ENCODE measurements at regions of chr12 and their contacts with region 1.

Region 1: DNA sequence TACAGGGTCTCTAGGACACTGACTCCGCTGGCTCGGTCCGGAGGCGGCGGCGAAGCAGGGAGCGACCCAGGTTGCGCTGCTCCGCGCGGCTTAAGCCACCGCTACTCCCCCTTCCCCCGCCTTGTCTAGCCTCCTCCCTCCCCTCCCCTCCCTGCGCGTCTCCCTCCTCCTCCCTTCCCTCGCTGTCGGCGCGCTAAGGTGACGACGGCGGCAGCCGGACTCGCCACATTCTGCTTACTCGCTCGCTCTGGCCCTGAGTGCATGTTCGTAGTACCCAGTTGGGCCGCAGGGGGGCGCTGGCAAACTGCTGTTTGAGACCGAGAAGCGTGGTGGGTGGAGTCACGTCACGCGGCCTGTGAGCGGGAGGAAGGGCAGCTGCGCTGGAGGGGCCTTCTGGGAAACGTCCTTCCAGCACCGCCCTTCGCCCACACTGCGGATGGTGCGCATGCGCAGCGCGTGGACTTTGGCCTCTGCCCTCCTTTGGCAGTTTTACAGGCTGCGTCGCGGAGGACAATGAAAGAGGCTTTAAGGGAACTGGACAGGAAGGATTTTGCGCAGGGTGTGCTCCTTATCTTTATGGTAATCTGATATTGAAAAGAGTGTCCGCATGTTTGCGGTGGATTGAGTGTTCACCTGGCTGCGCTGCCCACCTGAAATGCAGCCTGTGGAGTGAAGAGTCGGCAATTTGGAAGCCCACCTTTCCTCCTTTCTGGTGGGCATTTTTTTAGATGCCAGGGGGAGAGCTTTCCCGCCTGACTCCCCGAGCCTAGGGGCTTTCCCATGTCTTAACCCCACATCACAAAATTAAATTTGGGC is at the start of gene SCAF11:
- DNase-seq: peak; percentile 100
- H3K4me3 Mint-ChIP-seq: peak within 1 kb of the TSS; percentile 97
- H3K27ac Mint-ChIP-seq: peak within 1 kb of the TSS; percentile 99
- H3K4me1 Mint-ChIP-seq: peaks cover 40% of the 10 kb centered on the region
- H3K27me3 Mint-ChIP-seq: peaks cover 3% of the 10 kb centered on the region
- total RNA-seq, gene SCAF11: 114 to 116 TPM

Region 2: DNA sequence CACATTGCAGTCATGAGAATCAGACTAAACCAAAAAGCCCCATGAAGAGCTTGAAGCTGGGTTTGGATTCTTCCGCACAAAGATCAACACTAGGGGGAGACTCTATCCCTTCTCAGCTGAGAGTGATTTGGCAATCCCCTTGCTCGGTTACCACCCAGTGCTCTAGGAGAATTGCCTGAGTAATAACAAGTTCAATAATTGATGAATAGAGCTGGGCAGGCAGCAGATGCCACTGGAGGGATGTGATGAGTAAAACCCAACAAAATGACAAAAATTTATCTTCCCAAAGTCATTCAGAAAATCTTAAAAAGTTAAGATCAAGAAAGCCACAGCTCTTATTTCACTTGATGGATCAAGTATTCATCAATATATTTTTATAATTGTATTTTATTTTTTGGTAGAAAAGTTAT is 446.8 kb before region 1 on chr12:
- CTCF ChIA-PET with region 1: interaction called, 3 read pairs
- POLR2A ChIA-PET with region 1: no interaction called
- intact Hi-C with region 1: loop called (anchors 5 kb)
- DNase-seq: peak; percentile 58
- H3K4me3 Mint-ChIP-seq: no peak overlapping the region
- H3K27ac Mint-ChIP-seq: no peak overlapping the region
- H3K4me1 Mint-ChIP-seq: peaks cover 1% of the 10 kb centered on the region
- H3K27me3 Mint-ChIP-seq: peaks cover 2% of the 10 kb centered on the region

Region 3: GRCh38 chr12:45849289-45849688 is 141.4 kb before region 1 on chr12:
- CTCF ChIA-PET with region 1: no interaction called
- POLR2A ChIA-PET with region 1: no interaction called
- intact Hi-C with region 1: no loop called
- DNase-seq: no peak
- H3K4me3 Mint-ChIP-seq: no peak overlapping the region
- H3K27ac Mint-ChIP-seq: no peak overlapping the region
- H3K4me1 Mint-ChIP-seq: no peaks in the 10 kb centered on the region
- H3K27me3 Mint-ChIP-seq: no peaks in the 10 kb centered on the region

Region 4: DNA sequence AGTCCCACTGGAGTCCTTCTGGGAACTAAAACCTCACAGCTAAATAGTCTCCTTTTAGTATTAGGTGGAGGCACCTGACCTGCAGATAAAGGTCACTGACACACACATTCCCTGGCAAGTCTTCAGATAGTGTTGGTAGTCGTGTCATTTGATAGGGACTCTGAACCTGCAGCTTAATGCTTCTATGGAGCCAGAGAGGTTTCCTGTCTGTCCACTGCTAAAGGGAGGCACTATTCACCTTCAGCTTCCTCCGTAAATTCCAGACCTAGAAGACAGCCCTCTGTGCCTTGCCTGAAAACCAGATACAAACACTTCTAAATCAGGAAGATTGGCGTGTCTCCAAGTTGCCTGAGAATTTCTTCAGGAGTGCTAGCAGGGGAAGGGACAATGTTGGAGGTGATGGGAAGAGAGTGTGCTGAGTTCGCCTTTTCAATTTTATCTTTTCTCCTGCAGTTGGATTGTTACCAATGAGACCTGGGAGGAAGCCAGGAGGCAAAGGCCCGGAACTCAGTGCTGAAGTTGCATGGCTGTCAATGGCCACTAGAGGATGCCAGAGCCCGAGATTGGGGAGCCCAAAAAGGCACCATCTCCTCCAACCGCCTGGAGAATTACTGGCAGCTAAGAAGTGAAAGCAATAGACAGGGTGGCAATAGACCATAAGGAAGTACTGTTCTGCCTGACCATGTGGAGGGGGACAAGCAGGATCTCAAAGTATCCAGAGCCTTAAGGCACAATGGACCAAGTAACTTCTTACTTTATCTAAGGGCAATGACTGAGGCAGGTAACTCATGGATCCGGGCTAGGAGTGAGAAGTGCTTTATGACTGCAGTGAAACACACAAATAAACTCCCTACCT is 81.3 kb after region 1 on chr12:
- CTCF ChIA-PET with region 1: interaction called, 13 read pairs
- POLR2A ChIA-PET with region 1: no interaction called
- intact Hi-C with region 1: loop called (anchors 1 kb)
- DNase-seq: peak; percentile 74
- H3K4me3 Mint-ChIP-seq: no peak overlapping the region
- H3K27ac Mint-ChIP-seq: no peak overlapping the region
- H3K4me1 Mint-ChIP-seq: peaks cover 3% of the 10 kb centered on the region
- H3K27me3 Mint-ChIP-seq: no peaks in the 10 kb centered on the region

Region 5: GRCh38 chr12:46217541-46218321 is 227.1 kb after region 1 on chr12:
- CTCF ChIA-PET with region 1: no interaction called
- POLR2A ChIA-PET with region 1: interaction called, 7 read pairs
- intact Hi-C with region 1: loop called (anchors 2 kb)
- DNase-seq: peak; percentile 75
- H3K4me3 Mint-ChIP-seq: peak overlapping the region; percentile 61
- H3K27ac Mint-ChIP-seq: peak overlapping the region; percentile 98
- H3K4me1 Mint-ChIP-seq: peaks cover 95% of the 10 kb centered on the region
- H3K27me3 Mint-ChIP-seq: no peaks in the 10 kb centered on the region

Region 6: DNA sequence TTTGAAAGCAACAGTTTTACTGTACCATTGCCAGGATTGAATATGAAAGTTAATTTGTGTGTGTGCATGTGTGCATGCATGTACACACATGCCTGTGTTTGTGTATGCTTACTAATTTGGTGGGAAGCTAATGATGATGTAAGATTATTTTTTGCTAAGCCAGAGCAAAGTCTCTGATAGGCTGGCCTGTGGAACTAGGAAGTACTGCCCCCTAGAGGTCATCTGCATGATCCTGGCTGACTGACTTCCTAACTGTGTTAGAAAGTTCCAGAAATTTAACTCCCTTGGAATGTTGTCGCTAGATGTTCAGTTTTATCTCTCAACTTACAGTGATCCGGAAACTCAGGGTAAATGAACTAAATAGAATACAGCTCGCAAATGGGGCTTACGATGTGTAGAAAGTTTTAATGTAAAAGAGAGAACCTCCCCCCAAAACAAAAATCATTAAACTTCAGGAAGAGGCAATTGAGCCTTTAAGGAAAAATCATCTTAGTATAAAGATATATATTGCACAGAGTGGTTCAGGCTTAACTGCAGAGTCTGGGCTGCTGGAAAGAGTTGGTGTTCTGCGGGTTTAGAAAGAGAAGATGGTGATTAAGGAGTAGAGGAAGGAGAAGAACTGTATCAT is 312.5 kb after region 1 on chr12:
- CTCF ChIA-PET with region 1: no interaction called
- POLR2A ChIA-PET with region 1: no interaction called
- intact Hi-C with region 1: loop called (anchors 1 kb)
- DNase-seq: peak; percentile 51
- H3K4me3 Mint-ChIP-seq: no peak overlapping the region
- H3K27ac Mint-ChIP-seq: no peak overlapping the region
- H3K4me1 Mint-ChIP-seq: peaks cover 3% of the 10 kb centered on the region
- H3K27me3 Mint-ChIP-seq: no peaks in the 10 kb centered on the region

Region 7: GRCh38 chr12:46546634-46547286 is 556.1 kb after region 1 on chr12:
- CTCF ChIA-PET with region 1: interaction called, 3 read pairs
- POLR2A ChIA-PET with region 1: no interaction called
- intact Hi-C with region 1: loop called (anchors 1 kb)
- DNase-seq: peak; percentile 38
- H3K4me3 Mint-ChIP-seq: no peak overlapping the region
- H3K27ac Mint-ChIP-seq: peak overlapping the region; percentile 51
- H3K4me1 Mint-ChIP-seq: peaks cover 55% of the 10 kb centered on the region
- H3K27me3 Mint-ChIP-seq: no peaks in the 10 kb centered on the region

Region 8: DNA sequence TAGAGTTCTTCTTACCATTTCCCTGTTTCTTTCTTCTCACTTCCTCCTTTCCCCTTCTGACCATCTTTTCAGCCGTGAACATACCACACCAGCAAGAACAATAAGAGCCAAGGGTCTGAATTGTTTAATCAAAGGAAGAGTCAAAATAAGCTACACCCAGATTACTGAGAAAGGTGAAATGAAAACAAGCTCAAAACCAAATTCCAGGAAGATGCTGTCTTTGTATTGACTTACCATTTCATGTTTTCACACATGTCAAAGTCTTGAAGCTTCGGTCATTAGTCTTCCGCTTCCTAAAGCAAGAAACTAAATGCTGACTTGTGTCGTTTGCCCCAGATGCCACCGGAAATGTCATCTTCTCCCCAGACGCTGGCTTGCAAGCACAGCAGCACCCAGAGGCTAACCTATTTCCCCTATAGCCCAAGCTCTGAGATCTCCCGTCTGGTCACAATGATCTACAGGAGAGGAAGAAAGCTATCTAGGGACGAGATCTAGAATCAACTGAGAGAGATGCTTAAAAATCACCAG is 1225.5 kb after region 1 on chr12:
- CTCF ChIA-PET with region 1: no interaction called
- POLR2A ChIA-PET with region 1: no interaction called
- intact Hi-C with region 1: loop called (anchors 5 kb)
- DNase-seq: peak; percentile 87
- H3K4me3 Mint-ChIP-seq: peak overlapping the region; percentile 85
- H3K27ac Mint-ChIP-seq: peak overlapping the region; percentile 96
- H3K4me1 Mint-ChIP-seq: peaks cover 19% of the 10 kb centered on the region
- H3K27me3 Mint-ChIP-seq: no peaks in the 10 kb centered on the region